CD8-positive, alpha-beta T cell (primary cell): ENCODE measurements at regions of chr3 and their contacts with region 1.

Region 1: DNA sequence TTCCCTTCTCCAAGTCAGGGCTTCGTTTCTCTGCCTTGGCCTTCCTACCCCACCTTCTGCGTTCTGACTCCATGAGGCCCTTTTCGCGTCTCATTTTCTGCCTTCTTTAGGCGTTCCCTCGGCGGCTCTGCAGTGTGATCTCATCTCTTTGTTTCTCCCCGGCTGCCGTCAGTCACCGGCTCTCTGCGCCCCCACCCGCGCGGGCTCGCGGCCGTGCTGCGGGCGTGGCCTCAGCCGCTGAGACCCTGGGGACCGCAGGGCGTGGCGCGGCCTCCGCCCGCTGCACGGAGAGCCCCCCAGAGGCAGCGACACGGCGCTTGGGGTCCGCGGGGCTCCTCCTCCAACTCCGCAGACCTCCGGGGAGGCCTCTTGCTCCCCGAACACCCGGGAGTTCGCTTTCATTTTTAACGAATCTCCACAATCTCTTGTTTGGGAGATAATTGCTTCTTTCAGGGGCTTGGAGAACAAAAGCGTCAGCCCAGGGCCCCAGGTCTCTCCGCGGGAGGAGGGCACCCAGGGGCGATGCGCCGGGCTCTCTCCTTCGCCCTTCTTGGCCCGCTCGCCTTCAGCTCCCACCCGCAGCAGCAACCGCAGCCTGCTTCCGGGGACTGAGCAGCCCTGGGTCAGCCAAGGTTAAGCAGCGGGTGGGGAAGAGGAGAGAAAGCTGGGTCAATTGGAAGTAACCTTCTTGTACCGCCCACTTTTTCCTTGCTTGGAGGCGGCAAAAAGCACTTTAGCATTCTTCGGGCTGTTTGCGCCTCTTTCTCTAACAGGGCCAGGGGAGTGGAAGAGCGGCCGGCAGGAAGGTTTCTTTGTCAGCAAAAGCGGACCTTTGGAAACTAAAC is 35.2 kb downstream of the GAP43 start:
- DNase-seq: peak; percentile 46 to 85 (median 78)
- ATAC-seq: peak; percentile 92
- H3K4me3 ChIP-seq: peak overlapping the region; percentile 83 to 84
- H3K4me3 Mint-ChIP-seq: peak overlapping the region; percentile 91
- H3K27ac ChIP-seq: peak overlapping the region; percentile 63 to 90
- H3K27ac Mint-ChIP-seq: peak overlapping the region; percentile 98
- H3K4me1 ChIP-seq: peaks cover 17% of the 10 kb centered on the region
- H3K4me1 Mint-ChIP-seq: peaks cover 25% of the 10 kb centered on the region
- H3K27me3 ChIP-seq: no peaks in the 10 kb centered on the region
- H3K27me3 Mint-ChIP-seq: no peaks in the 10 kb centered on the region
- CTCF ChIP-seq: no peak

Region 2: DNA sequence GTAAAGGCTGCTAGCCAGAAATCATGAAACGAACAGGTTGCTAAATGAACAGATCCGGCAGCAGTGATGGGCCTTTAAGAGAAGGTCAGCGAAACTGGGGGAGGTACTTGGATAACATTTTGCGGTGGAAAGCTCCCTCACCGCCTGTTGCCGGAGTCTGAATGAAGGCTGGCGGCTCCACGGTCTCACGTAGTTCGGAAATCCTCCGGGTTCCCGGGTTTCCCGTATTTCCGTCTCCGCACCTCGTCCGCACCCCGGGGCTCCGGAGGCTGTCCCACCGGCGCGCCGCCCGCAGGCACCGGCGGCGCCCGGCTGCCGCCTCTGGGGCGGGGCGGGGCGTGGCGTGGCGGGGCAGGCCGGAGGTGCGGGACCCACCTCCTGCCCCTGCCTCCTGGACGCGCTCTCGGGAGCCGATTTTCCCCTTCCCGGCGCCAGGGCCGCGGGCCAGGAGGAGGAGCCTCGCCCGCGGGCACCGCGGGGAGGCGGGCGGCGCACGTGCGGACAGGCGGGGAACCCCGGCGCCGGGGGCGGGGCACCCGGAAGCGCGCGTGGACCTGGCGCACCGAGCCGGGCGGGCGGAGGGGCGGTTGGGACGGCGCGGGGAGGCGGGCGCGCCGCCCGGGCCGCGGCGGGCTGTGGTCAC is 1711.1 kb before region 1 on chr3 and contains the start of gene ZDHHC23:
- CTCF ChIA-PET with region 1: no interaction called
- POLR2A ChIA-PET with region 1: no interaction called
- intact Hi-C with region 1: loop called in 1 of 2 experiments (anchors 10 kb)
- DNase-seq: peak; percentile 21 to 88 (median 63)
- ATAC-seq: peak; percentile 87
- H3K4me3 ChIP-seq: peak within 1 kb of the TSS; percentile 74 to 85
- H3K4me3 Mint-ChIP-seq: peak within 1 kb of the TSS; percentile 86
- H3K27ac ChIP-seq: no peak within 1 kb of the TSS
- H3K27ac Mint-ChIP-seq: peak within 1 kb of the TSS; percentile 84
- H3K4me1 ChIP-seq: peaks cover 8% of the 10 kb centered on the region
- H3K4me1 Mint-ChIP-seq: peaks cover 10% of the 10 kb centered on the region
- H3K27me3 ChIP-seq: no peaks in the 10 kb centered on the region
- H3K27me3 Mint-ChIP-seq: peaks cover 21% of the 10 kb centered on the region
- CTCF ChIP-seq: no peak
- total RNA-seq, gene ZDHHC23: 2.1 to 4.7 TPM

Region 3: DNA sequence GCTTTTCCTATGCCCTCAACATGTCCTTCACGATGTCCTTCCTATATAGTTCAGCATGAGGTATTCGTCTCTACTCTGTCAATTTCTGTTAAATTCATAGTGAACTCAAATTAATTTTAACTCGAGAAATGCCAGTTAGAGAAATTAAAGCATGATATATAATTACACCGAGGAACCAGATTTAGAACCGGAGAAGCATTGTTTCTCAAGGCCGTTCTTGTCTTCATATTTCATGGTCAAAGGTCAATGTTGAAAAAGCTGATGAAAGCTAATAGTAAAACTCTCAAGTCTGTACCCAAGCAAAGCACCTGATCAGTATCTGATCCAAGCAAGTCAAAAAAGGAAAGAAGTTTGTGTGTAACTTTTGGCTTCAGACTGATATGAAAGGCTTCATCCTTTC is 675.3 kb before region 1 on chr3:
- CTCF ChIA-PET with region 1: no interaction called
- POLR2A ChIA-PET with region 1: no interaction called
- intact Hi-C with region 1: no loop called
- DNase-seq: no peak
- ATAC-seq: no peak
- H3K4me3 ChIP-seq: no peak overlapping the region
- H3K4me3 Mint-ChIP-seq: no peak overlapping the region
- H3K27ac ChIP-seq: no peak overlapping the region
- H3K27ac Mint-ChIP-seq: no peak overlapping the region
- H3K4me1 ChIP-seq: no peaks in the 10 kb centered on the region
- H3K4me1 Mint-ChIP-seq: peaks cover 10% of the 10 kb centered on the region
- H3K27me3 ChIP-seq: no peaks in the 10 kb centered on the region
- H3K27me3 Mint-ChIP-seq: no peaks in the 10 kb centered on the region
- CTCF ChIP-seq: no peak

Region 4: GRCh38 chr3:115512565-115513415 is 145.8 kb before region 1 on chr3:
- CTCF ChIA-PET with region 1: no interaction called
- POLR2A ChIA-PET with region 1: no interaction called
- intact Hi-C with region 1: loop called in 1 of 2 experiments (anchors 10 kb)
- DNase-seq: peak in 2 of 9 experiments; percentile 14 to 35
- ATAC-seq: peak; percentile 72
- H3K4me3 ChIP-seq: peak overlapping the region; percentile 48 to 53
- H3K4me3 Mint-ChIP-seq: peak overlapping the region; percentile 89
- H3K27ac ChIP-seq: no peak overlapping the region
- H3K27ac Mint-ChIP-seq: no peak overlapping the region
- H3K4me1 ChIP-seq: no peaks in the 10 kb centered on the region
- H3K4me1 Mint-ChIP-seq: peaks cover 20% of the 10 kb centered on the region
- H3K27me3 ChIP-seq: no peaks in the 10 kb centered on the region
- H3K27me3 Mint-ChIP-seq: peaks cover 39% of the 10 kb centered on the region
- CTCF ChIP-seq: no peak